Naive thymus-derived CD4-positive, alpha-beta T cell (primary cell): ENCODE measurements at regions of chr5 and their contacts with region 1.

Region 1: GRCh38 chr5:126656396-126657007 is 55.8 kb downstream of the PHAX start:
- DNase-seq: peak in 5 of 9 donors; percentile 13 to 27 (median 24)
- ATAC-seq: no peak
- H3K4me3 ChIP-seq: no peak overlapping the region
- H3K4me3 Mint-ChIP-seq: no peak overlapping the region
- H3K27ac ChIP-seq: no peak overlapping the region
- H3K27ac Mint-ChIP-seq: no peak overlapping the region
- H3K4me1 ChIP-seq: no peaks in the 10 kb centered on the region
- H3K4me1 Mint-ChIP-seq: peaks cover 0 to 8% (median 0%) of the 10 kb centered on the region in 7 donors
- H3K27me3 ChIP-seq: no peaks in the 10 kb centered on the region
- H3K27me3 Mint-ChIP-seq: peaks cover 0 to 9% (median 0%) of the 10 kb centered on the region in 5 donors

Region 2: DNA sequence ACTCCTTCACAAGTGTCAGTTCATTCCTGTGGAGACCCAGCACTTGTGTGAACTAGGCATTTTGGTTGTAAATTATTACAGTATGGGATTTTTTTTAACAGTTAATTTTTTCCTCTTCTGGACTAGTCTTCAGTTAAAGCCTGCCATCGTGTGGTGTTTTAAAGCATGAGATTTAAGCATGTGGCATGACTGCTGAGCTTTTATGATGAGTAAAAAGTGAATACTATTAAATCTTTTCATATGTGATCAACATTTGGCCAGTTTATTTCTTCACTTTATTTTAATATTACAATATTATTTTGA is 145.4 kb after region 1 on chr5:
- CTCF ChIA-PET with region 1: interaction called, 6 read pairs
- POLR2A ChIA-PET with region 1: no interaction called
- intact Hi-C with region 1: loop called (anchors 1 to 2 kb)
- DNase-seq: peak in 3 of 9 donors; percentile 5 to 33 (median 32)
- ATAC-seq: peak; percentile 61
- H3K4me3 ChIP-seq: no peak overlapping the region
- H3K4me3 Mint-ChIP-seq: no peak overlapping the region
- H3K27ac ChIP-seq: no peak overlapping the region
- H3K27ac Mint-ChIP-seq: peak overlapping the region in 2 of 9 donors; percentile 24 to 28
- H3K4me1 ChIP-seq: peaks cover 5 to 7% of the 10 kb centered on the region in 2 donors
- H3K4me1 Mint-ChIP-seq: peaks cover 18 to 58% (median 27%) of the 10 kb centered on the region in 7 donors
- H3K27me3 ChIP-seq: no peaks in the 10 kb centered on the region
- H3K27me3 Mint-ChIP-seq: no peaks in the 10 kb centered on the region

Region 3: DNA sequence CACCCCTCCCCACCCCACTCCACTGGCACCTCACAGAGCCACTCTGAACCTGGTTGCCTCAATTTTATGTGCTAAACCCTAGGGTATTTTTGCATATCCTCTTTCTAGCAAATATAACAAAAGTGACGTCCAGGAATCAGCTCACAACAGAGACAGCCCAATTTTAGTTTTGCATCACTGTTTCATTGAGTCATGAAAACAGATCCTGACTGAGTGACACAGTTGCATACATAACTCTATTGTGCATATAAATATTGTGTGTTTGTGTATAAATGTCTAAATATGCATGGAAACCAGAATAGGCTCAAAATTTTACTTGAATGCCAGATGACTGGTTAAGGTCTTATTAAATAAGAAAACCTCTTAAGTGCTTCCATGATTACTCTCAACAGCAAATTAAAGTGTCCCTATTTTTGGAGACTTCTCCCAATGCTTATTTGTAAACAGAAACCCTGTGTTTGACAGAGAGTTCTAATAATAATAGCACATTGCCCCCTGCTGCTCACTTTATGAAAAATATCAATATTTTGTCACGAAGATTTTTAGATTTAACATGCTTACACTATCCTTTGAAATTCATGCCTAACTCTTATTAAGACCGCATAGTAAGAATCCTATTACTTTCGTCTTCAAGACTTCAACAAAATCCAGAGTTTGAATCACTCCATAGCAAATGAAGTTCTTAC is 785.4 kb after region 1 on chr5:
- CTCF ChIA-PET with region 1: no interaction called
- POLR2A ChIA-PET with region 1: no interaction called
- intact Hi-C with region 1: loop called in 1 of 2 experiments (anchors 2 kb)
- DNase-seq: no peak
- ATAC-seq: no peak
- H3K4me3 ChIP-seq: no peak overlapping the region
- H3K4me3 Mint-ChIP-seq: no peak overlapping the region
- H3K27ac ChIP-seq: no peak overlapping the region
- H3K27ac Mint-ChIP-seq: no peak overlapping the region
- H3K4me1 ChIP-seq: no peaks in the 10 kb centered on the region
- H3K4me1 Mint-ChIP-seq: no peaks in the 10 kb centered on the region
- H3K27me3 ChIP-seq: no peaks in the 10 kb centered on the region
- H3K27me3 Mint-ChIP-seq: peaks cover 0 to 24% (median 8%) of the 10 kb centered on the region in 5 donors